Activated CD4-positive, alpha-beta T cell treated with anti-CD3 and anti-CD28 coated beads for 36 hours (primary cell): ENCODE measurements at regions of chr17 and their contacts with region 1.

Region 1: GRCh38 chr17:19004421-19005136 is at the start of gene FAM83G:
- DNase-seq: peak; percentile 94
- ATAC-seq: peak; percentile 87
- H3K4me3 Mint-ChIP-seq: peak within 1 kb of the TSS; percentile 88
- H3K27ac Mint-ChIP-seq: peak within 1 kb of the TSS; percentile 89
- H3K4me1 Mint-ChIP-seq: peaks cover 26% of the 10 kb centered on the region
- H3K27me3 Mint-ChIP-seq: no peaks in the 10 kb centered on the region
- total RNA-seq, gene FAM83G: 11.1 to 14.3 TPM

Region 2: GRCh38 chr17:18855831-18856569 is 148.6 kb before region 1 on chr17:
- CTCF ChIA-PET with region 1: no interaction called
- POLR2A ChIA-PET with region 1: no interaction called
- intact Hi-C with region 1: loop called in 1 of 2 experiments (anchors 1 kb)
- DNase-seq: peak; percentile 94
- ATAC-seq: peak; percentile 85
- H3K4me3 Mint-ChIP-seq: peak overlapping the region; percentile 92
- H3K27ac Mint-ChIP-seq: peak overlapping the region; percentile 90
- H3K4me1 Mint-ChIP-seq: peaks cover 45% of the 10 kb centered on the region
- H3K27me3 Mint-ChIP-seq: no peaks in the 10 kb centered on the region

Region 3: GRCh38 chr17:18877104-18877503 is 127.5 kb before region 1 on chr17:
- CTCF ChIA-PET with region 1: no interaction called
- POLR2A ChIA-PET with region 1: no interaction called
- intact Hi-C with region 1: no loop called
- DNase-seq: no peak
- ATAC-seq: no peak
- H3K4me3 Mint-ChIP-seq: no peak overlapping the region
- H3K27ac Mint-ChIP-seq: peak overlapping the region; percentile 32
- H3K4me1 Mint-ChIP-seq: no peaks in the 10 kb centered on the region
- H3K27me3 Mint-ChIP-seq: no peaks in the 10 kb centered on the region

Region 4: DNA sequence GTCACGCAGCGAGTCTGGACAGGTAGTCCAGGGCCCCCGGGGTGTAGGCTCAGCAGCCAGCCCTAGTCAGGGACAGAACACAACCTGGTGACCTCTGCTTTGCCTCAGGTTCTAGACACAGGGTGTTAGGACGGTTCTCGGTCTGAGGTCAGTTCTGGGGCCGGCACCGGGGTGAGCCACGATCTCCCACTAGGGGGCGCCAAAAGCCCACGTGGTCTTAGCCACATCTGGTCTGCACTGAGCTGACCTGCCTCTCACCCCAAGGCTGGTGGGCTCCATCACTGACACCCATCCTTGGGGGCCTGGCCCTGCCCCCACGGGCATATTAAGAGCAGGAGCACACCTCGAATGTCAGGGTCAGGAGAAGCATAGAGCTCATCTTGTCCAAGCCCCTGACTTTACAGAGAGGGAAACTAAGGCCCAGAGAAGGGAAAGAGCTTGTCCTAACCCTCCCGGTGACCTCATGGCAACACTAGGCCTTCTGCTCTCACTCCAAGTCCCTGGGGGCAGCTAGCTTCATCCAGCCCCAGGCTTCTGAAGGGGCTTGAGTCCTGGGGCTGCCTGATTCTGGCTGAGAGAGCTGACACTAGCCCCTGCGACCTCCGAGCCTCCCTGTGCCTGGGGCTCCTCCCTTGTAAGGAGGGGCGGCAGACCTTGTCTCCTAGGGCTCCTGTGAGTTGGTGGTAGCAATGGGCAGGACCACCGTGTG is 43.6 kb before region 1 on chr17:
- CTCF ChIA-PET with region 1: interaction called, 15 read pairs
- POLR2A ChIA-PET with region 1: interaction called, 5 read pairs
- intact Hi-C with region 1: loop called in 1 of 2 experiments (anchors 5 kb)
- DNase-seq: peak; percentile 91
- ATAC-seq: peak; percentile 93
- H3K4me3 Mint-ChIP-seq: no peak overlapping the region
- H3K27ac Mint-ChIP-seq: no peak overlapping the region
- H3K4me1 Mint-ChIP-seq: peaks cover 22% of the 10 kb centered on the region
- H3K27me3 Mint-ChIP-seq: no peaks in the 10 kb centered on the region

Region 5: GRCh38 chr17:18992454-18993130 is 12.0 kb before region 1 on chr17:
- CTCF ChIA-PET with region 1: no interaction called
- POLR2A ChIA-PET with region 1: interaction called, 4 read pairs
- intact Hi-C with region 1: loop called in 1 of 2 experiments (anchors 1 kb)
- DNase-seq: peak; percentile 33
- ATAC-seq: peak; percentile 49
- H3K4me3 Mint-ChIP-seq: no peak overlapping the region
- H3K27ac Mint-ChIP-seq: no peak overlapping the region
- H3K4me1 Mint-ChIP-seq: peaks cover 19% of the 10 kb centered on the region
- H3K27me3 Mint-ChIP-seq: no peaks in the 10 kb centered on the region